CD4-positive, alpha-beta memory T cell (primary cell): ENCODE measurements at regions of chr7 and their contacts with region 1.

Region 1: GRCh38 chr7:111038185-111038584 is 52.7 kb upstream of the LRRN3 start:
- DNase-seq: no peak
- H3K4me3 ChIP-seq: no peak overlapping the region
- H3K4me3 Mint-ChIP-seq: no peak overlapping the region
- H3K27ac ChIP-seq: no peak overlapping the region
- H3K27ac Mint-ChIP-seq: no peak overlapping the region
- H3K4me1 ChIP-seq: no peaks in the 10 kb centered on the region
- H3K4me1 Mint-ChIP-seq: no peaks in the 10 kb centered on the region
- H3K27me3 ChIP-seq: no peaks in the 10 kb centered on the region
- H3K27me3 Mint-ChIP-seq: no peaks in the 10 kb centered on the region

Region 2: GRCh38 chr7:110685899-110686298 is 352.3 kb before region 1 on chr7:
- CTCF ChIA-PET with region 1: no interaction called
- POLR2A ChIA-PET with region 1: no interaction called
- intact Hi-C with region 1: no loop called
- DNase-seq: no peak
- H3K4me3 ChIP-seq: no peak overlapping the region
- H3K4me3 Mint-ChIP-seq: no peak overlapping the region
- H3K27ac ChIP-seq: no peak overlapping the region
- H3K27ac Mint-ChIP-seq: no peak overlapping the region
- H3K4me1 ChIP-seq: no peaks in the 10 kb centered on the region
- H3K4me1 Mint-ChIP-seq: no peaks in the 10 kb centered on the region
- H3K27me3 ChIP-seq: no peaks in the 10 kb centered on the region
- H3K27me3 Mint-ChIP-seq: no peaks in the 10 kb centered on the region

Region 3: DNA sequence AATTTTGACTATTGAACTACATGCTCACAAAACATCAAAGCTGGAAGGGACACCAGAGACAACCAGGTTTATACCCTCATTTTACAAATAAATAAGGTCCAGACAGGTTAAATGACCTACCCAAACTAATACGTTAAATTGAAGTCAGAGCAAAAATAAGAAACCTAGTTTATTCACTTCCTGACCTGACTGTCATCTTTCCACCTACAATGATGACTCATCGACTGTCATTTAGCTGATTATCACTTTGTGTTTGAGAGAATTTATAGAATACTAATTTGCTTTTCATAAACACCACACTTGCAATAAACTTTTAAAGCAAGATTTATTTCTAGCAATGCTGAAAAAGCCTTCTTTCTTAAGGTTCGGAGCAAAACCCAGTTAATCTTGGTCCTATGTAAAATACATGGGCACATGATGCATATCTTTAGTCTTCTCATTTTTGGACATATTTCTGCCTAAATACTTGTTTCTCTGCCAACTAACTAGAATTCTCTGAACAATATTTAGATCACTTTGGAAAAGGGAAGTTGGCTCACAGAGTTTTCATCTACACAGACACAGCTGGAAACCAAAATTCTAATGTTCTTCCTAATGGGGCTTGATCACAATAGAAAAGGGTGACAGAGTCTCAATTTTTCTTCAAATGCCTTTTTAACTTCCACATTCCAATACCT is 36.0 kb after region 1 on chr7:
- CTCF ChIA-PET with region 1: no interaction called
- POLR2A ChIA-PET with region 1: no interaction called
- intact Hi-C with region 1: loop called (anchors 5 kb)
- DNase-seq: no peak
- H3K4me3 ChIP-seq: no peak overlapping the region
- H3K4me3 Mint-ChIP-seq: peak overlapping the region in 1 of 8 donors; percentile 32
- H3K27ac ChIP-seq: no peak overlapping the region
- H3K27ac Mint-ChIP-seq: peak overlapping the region in 1 of 7 donors; percentile 36
- H3K4me1 ChIP-seq: peaks cover 22% of the 10 kb centered on the region
- H3K4me1 Mint-ChIP-seq: peaks cover 14 to 29% (median 17%) of the 10 kb centered on the region in 4 donors
- H3K27me3 ChIP-seq: no peaks in the 10 kb centered on the region
- H3K27me3 Mint-ChIP-seq: no peaks in the 10 kb centered on the region